ENCODE measurements at regions of chr16 and their contacts with region 1.

Region 1: GRCh38 chr16:25922438-25922837 is 230.7 kb downstream of the HS3ST4 start:
- DNase-seq: no peak
- H3K4me3 Mint-ChIP-seq: no peak overlapping the region
- H3K27ac Mint-ChIP-seq: no peak overlapping the region
- H3K4me1 Mint-ChIP-seq: no peaks in the 10 kb centered on the region
- H3K27me3 Mint-ChIP-seq: no peaks in the 10 kb centered on the region
- CTCF ChIP-seq: no peak

Region 2: DNA sequence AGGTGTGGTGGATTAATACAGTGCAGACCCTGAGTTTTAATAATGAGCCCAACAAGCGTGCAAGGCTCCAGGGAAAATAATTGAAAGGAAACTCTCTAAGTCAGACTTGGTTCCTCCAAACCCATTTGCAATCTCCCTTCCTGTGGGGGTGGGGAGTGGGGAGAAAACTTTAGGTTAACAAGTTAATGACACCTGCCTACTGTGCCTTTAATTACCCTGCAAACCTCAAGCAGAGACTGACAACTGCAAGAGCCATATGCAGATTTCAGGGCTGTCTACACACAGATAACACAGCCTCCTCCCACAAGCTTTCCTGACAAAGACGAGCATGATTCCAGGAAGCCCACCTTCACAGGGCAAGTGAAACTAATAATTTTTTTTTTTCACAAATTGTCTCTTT is 128.6 kb after region 1 on chr16:
- CTCF ChIA-PET with region 1: no interaction called
- intact Hi-C with region 1: no loop called
- DNase-seq: no peak
- H3K4me3 Mint-ChIP-seq: no peak overlapping the region
- H3K27ac Mint-ChIP-seq: no peak overlapping the region
- H3K4me1 Mint-ChIP-seq: no peaks in the 10 kb centered on the region
- H3K27me3 Mint-ChIP-seq: no peaks in the 10 kb centered on the region
- CTCF ChIP-seq: no peak

Region 3: GRCh38 chr16:26963114-26963513 is 1040.7 kb after region 1 on chr16:
- CTCF ChIA-PET with region 1: interaction called, 12 read pairs
- intact Hi-C with region 1: no loop called
- DNase-seq: no peak
- H3K4me3 Mint-ChIP-seq: no peak overlapping the region
- H3K27ac Mint-ChIP-seq: no peak overlapping the region
- H3K4me1 Mint-ChIP-seq: no peaks in the 10 kb centered on the region
- H3K27me3 Mint-ChIP-seq: peaks cover 37% of the 10 kb centered on the region
- CTCF ChIP-seq: no peak